A673 (cell line): ENCODE measurements at regions of chr1 and their contacts with region 1.

Region 1: GRCh38 chr1:154558575-154559465 is at the start of gene UBE2Q1:
- DNase-seq: peak; percentile 100
- H3K4me3 ChIP-seq: peak within 1 kb of the TSS; percentile 96
- H3K27ac ChIP-seq: peak within 1 kb of the TSS; percentile 85
- H3K4me1 ChIP-seq: peaks cover 18% of the 10 kb centered on the region
- H3K27me3 ChIP-seq: no peaks in the 10 kb centered on the region
- CTCF ChIP-seq: no peak
- total RNA-seq, gene UBE2Q1: 84.5 and 104 TPM in 2 replicates

Region 2: DNA sequence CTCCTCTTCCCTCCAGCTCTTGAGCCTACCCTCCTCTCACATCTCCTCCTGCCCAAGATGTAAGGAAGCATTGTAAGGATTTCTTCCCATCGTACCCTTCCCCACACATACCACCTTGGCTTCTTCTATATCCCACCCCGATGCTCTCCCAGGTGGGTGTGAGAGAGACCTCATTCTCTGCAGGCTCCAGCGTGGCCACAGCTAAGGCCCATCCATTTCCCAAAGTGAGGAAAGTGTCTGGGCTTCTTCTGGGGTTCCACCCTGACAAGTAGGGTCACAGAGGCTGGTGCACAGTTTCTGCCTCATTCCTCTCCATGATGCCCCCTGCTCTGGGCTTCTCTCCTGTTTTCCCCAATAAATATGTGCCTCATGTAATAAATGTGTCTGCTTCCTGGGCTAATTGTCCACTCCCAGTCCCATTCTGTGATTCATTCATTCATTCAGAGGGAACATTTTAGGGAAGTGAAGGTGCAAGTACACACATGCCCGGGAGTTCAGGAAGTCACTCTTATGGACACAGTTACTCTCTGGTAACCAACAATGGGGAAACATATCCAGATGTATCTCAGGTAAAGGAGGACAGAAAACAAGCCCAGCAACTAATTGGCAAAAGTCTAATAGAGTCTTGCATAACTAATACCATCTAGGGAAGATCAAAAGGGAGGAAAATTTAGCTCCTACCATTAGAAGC is 1586.5 kb before region 1 on chr1:
- CTCF ChIA-PET with region 1: no interaction called
- POLR2A ChIA-PET with region 1: no interaction called
- intact Hi-C with region 1: no loop called
- DNase-seq: no peak
- H3K4me3 ChIP-seq: no peak overlapping the region
- H3K27ac ChIP-seq: no peak overlapping the region
- H3K4me1 ChIP-seq: no peaks in the 10 kb centered on the region
- H3K27me3 ChIP-seq: peaks cover 1% of the 10 kb centered on the region
- CTCF ChIP-seq: no peak

Region 3: GRCh38 chr1:154479764-154480421 is 78.9 kb before region 1 on chr1:
- CTCF ChIA-PET with region 1: interaction called, 15 read pairs
- POLR2A ChIA-PET with region 1: no interaction called
- intact Hi-C with region 1: no loop called
- DNase-seq: peak; percentile 95
- H3K4me3 ChIP-seq: no peak overlapping the region
- H3K27ac ChIP-seq: peak overlapping the region; percentile 39
- H3K4me1 ChIP-seq: peaks cover 33% of the 10 kb centered on the region
- H3K27me3 ChIP-seq: no peaks in the 10 kb centered on the region
- CTCF ChIP-seq: peak; percentile 95

Region 4: GRCh38 chr1:154607609-154608396 is 49.0 kb after region 1 on chr1 and contains the start of gene ADAR:
- CTCF ChIA-PET with region 1: interaction called, 6 read pairs
- POLR2A ChIA-PET with region 1: no interaction called
- intact Hi-C with region 1: loop called (anchors 5 kb)
- DNase-seq: peak; percentile 98
- H3K4me3 ChIP-seq: peak within 1 kb of the TSS; percentile 91
- H3K27ac ChIP-seq: peak within 1 kb of the TSS; percentile 98
- H3K4me1 ChIP-seq: peaks cover 23% of the 10 kb centered on the region
- H3K27me3 ChIP-seq: no peaks in the 10 kb centered on the region
- CTCF ChIP-seq: 0 out of 2 replicates have a peak, but pooled peaks have one; percentile 7
- total RNA-seq, gene ADAR: 165 and 171 TPM in 2 replicates

Region 5: DNA sequence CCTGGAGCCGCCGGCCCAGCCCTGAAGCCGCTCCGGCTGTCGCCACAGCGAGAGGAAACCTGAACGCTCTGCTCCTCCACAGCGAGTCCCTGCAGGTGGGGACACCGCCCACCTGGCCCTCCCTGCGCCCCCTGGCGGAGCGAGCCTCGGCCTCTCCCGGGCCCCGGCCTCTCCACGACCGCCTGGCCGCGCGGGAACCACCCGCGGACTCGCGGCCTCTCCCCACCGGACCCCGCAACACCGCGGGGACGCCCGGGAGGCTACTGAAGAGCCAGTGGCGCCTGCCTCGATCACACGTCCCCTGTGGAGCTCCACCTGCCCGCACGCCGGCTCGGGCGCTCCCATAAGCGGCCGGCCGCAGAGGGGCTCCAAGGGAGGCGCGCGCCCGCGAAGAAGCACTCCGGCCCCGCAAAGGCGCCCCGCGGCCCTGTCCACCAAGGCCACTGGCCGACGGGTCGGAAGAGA is 201.7 kb after region 1 on chr1:
- CTCF ChIA-PET with region 1: no interaction called
- POLR2A ChIA-PET with region 1: no interaction called
- intact Hi-C with region 1: loop called (anchors 10 kb)
- DNase-seq: peak; percentile 27
- H3K4me3 ChIP-seq: peak overlapping the region; percentile 36
- H3K27ac ChIP-seq: no peak overlapping the region
- H3K4me1 ChIP-seq: no peaks in the 10 kb centered on the region
- H3K27me3 ChIP-seq: peaks cover 26% of the 10 kb centered on the region
- CTCF ChIP-seq: peak; percentile 68

Region 6: GRCh38 chr1:154982897-154983648 is 424.3 kb after region 1 on chr1 and contains the start of gene FLAD1:
- CTCF ChIA-PET with region 1: interaction called, 15 read pairs
- POLR2A ChIA-PET with region 1: no interaction called
- intact Hi-C with region 1: no loop called
- DNase-seq: peak; percentile 100
- H3K4me3 ChIP-seq: peak within 1 kb of the TSS; percentile 76
- H3K27ac ChIP-seq: peak within 1 kb of the TSS; percentile 75
- H3K4me1 ChIP-seq: peaks cover 6% of the 10 kb centered on the region
- H3K27me3 ChIP-seq: no peaks in the 10 kb centered on the region
- CTCF ChIP-seq: no peak
- total RNA-seq, gene FLAD1: 82.4 and 84.2 TPM in 2 replicates

Region 7: DNA sequence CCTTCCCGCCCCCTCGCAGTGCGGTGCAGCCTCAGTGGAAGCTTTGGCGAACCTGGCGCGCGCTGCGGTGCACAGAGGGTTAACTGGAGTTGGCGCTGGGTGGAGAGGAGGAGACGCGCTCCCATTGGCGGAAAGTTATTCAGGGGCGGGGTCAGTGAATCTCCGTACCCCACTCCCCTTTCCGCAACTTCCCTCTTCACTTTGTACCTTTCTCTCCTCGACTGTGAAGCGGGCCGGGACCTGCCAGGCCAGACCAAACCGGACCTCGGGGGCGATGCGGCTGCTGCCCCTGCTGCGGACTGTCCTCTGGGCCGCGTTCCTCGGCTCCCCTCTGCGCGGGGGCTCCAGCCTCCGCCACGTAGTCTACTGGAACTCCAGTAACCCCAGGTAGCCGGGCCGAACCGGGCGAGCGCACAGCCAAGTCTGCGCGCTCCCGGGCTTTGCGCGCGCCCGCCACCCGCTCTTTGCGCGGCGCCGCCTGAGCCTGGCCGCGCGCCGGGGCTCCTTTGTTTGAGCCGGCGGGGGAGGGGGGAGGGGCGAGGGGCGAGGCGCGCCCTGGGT is 504.8 kb after region 1 on chr1 and contains the start of gene EFNA4:
- CTCF ChIA-PET with region 1: interaction called, 3 read pairs
- POLR2A ChIA-PET with region 1: no interaction called
- intact Hi-C with region 1: loop called (anchors 5 kb)
- DNase-seq: peak; percentile 96
- H3K4me3 ChIP-seq: peak within 1 kb of the TSS; percentile 81
- H3K27ac ChIP-seq: peak within 1 kb of the TSS; percentile 89
- H3K4me1 ChIP-seq: peaks cover 31% of the 10 kb centered on the region
- H3K27me3 ChIP-seq: no peaks in the 10 kb centered on the region
- CTCF ChIP-seq: no peak
- total RNA-seq, gene EFNA4: 17.0 and 18.8 TPM in 2 replicates

Region 8: DNA sequence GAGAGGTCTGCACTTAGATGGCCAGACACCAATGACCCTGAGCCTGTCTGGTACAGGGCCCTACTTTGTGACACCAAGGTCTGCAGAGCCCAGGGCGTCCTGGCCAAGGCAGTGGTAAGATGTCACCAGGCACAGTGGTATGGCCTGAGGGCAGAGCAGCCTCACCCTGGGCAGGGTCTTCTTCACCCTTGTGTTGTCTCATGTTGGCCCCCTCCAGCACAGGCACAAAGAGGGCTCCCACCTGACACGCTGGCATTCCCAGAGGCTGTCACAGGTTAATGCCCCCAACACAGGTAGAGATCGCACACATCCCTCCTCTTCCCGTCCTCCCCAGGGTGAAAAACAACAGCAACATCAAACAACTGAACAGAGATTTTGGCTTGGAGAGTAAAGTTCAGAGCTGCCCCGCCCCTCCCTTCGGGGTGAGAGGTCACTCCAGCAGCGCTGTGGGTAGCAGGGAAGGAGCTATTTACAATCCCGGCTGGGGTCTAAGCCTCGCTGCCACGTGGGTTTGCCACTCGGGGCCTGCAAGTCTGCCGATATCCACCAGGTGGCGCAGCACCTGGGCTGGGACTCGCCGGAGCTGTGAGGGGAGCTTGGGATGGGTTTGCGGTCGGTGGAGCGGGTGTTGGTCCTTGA is 532.4 kb after region 1 on chr1:
- CTCF ChIA-PET with region 1: interaction called, 10 read pairs
- POLR2A ChIA-PET with region 1: no interaction called
- intact Hi-C with region 1: no loop called
- DNase-seq: peak; percentile 91
- H3K4me3 ChIP-seq: no peak overlapping the region
- H3K27ac ChIP-seq: no peak overlapping the region
- H3K4me1 ChIP-seq: peaks cover 7% of the 10 kb centered on the region
- H3K27me3 ChIP-seq: no peaks in the 10 kb centered on the region
- CTCF ChIP-seq: peak; percentile 99